Adrenal gland (tissue), 19 donors: ENCODE measurements at regions of chr20 and their contacts with region 1.

Region 1: GRCh38 chr20:1894951-1895673 is at the start of gene SIRPA:
- DNase-seq: peak; percentile 75 to 87 (median 80)
- H3K4me3 ChIP-seq: peak within 1 kb of the TSS in 3 of 4 donors; percentile 57 to 94 (median 70)
- H3K27ac ChIP-seq: peak within 1 kb of the TSS; percentile 75 to 99 (median 91)
- H3K4me1 ChIP-seq: peaks cover 20 to 65% of the 10 kb centered on the region in 2 donors
- H3K27me3 ChIP-seq: no peaks in the 10 kb centered on the region
- CTCF ChIP-seq: no peak
- POLR2A ChIP-seq: peak; percentile 21 to 57
- total RNA-seq, gene SIRPA: 22.2 to 102 (median 72.5) TPM

Region 2: DNA sequence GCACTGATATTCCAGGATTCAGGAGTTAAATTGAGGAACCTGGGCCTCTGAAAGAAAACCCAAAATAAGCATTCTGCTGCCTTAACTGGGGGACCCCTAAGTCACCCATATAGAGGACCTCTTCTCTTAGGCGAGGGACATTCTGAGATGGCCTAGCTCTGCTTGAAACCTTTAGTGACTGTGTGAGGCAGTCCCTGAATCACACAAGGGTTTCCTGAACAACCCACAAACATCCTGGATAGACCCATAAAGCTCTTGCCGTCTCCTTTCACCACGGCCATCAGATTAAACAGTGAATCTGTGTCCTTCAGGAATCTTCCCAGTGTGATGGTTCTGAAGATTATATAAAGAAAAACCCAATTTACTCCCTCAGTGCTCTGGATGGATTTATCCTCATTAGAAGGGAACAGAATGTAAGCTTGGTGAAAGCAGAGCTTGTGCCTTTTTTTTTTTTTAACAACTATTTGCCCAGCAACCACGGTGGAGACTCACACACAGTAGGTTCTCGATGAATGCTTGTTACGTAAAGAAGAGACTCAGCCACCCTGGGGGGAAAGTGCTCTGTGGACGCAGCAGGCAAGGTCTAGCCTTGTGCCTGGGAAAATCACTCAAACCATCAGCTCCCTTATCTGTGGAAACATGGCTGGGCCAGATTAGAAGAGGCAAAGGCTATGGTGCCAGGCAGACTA is 198.4 kb before region 1 on chr20:
- intact Hi-C with region 1: no loop called
- DNase-seq: no peak
- H3K4me3 ChIP-seq: no peak overlapping the region
- H3K27ac ChIP-seq: no peak overlapping the region
- H3K4me1 ChIP-seq: no peaks in the 10 kb centered on the region
- H3K27me3 ChIP-seq: no peaks in the 10 kb centered on the region
- CTCF ChIP-seq: no peak
- POLR2A ChIP-seq: no peak

Region 3: GRCh38 chr20:1860446-1860845 is 34.7 kb before region 1 on chr20:
- intact Hi-C with region 1: no loop called
- DNase-seq: no peak
- H3K4me3 ChIP-seq: no peak overlapping the region
- H3K27ac ChIP-seq: no peak overlapping the region
- H3K4me1 ChIP-seq: no peaks in the 10 kb centered on the region
- H3K27me3 ChIP-seq: no peaks in the 10 kb centered on the region
- CTCF ChIP-seq: no peak
- POLR2A ChIP-seq: no peak

Region 4: DNA sequence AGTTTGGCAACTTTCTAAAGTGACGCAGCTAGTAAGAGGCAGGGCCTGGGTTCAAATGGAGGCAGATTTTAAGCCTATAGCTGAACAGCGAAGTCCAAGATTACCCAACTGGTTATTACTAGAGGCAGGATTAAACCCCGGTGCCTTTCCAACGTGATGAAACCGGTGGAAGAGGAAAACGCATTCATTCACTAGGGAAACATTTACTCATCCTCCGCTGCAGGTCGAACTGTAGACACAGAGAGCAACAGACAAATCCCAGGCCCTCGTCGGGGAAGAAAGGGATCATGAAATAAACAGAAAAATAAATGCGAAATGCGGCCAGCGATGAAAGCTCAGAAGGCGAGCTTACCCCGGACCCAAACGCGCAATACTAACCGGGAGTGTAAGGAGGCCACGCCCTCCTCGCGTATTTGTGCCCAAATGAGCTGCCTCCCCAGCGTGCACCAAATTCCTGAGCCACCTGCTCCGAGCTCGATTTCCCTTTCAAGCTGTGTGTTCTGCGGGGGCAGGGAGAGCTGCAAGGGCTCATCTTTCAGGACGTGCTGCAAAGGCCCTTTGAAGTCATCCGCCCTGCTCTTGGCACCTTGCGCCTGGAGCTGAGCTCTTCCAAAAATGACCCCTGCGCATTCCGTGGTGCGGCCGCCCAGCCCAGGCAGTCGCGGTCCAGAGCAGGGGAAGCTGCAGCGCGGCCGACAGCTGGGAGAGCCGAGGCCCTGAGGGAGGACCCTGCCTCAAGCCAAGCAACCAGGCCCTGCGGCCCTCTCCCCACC is 51.8 kb after region 1 on chr20:
- intact Hi-C with region 1: loop called in 1 of 2 experiments (anchors 10 kb)
- DNase-seq: no peak
- H3K4me3 ChIP-seq: no peak overlapping the region
- H3K27ac ChIP-seq: peak overlapping the region in 4 of 5 donors; percentile 3 to 72 (median 18)
- H3K4me1 ChIP-seq: peaks cover 18 to 45% of the 10 kb centered on the region in 2 donors
- H3K27me3 ChIP-seq: no peaks in the 10 kb centered on the region
- CTCF ChIP-seq: no peak
- POLR2A ChIP-seq: no peak

Region 5: GRCh38 chr20:1959156-1959555 is 64.0 kb after region 1 on chr20:
- intact Hi-C with region 1: no loop called
- DNase-seq: no peak
- H3K4me3 ChIP-seq: no peak overlapping the region
- H3K27ac ChIP-seq: no peak overlapping the region
- H3K4me1 ChIP-seq: peaks cover 4 to 7% of the 10 kb centered on the region in 2 donors
- H3K27me3 ChIP-seq: no peaks in the 10 kb centered on the region
- CTCF ChIP-seq: no peak
- POLR2A ChIP-seq: no peak